Activated CD8-positive, alpha-beta memory T cell treated with anti-CD3 and anti-CD28 coated beads, Interleukin-2, amount 10 ng/mL, durations not matched to agents 7 days and 5 days (primary cell): ENCODE measurements at regions of chrX and their contacts with region 1.

Region 1: GRCh38 chrX:154013614-154014360 is 5.9 kb downstream of the IRAK1 start:
- DNase-seq: peak; percentile 50
- ATAC-seq: peak; percentile 75
- H3K4me3 Mint-ChIP-seq: no peak overlapping the region
- H3K27ac Mint-ChIP-seq: peak overlapping the region; percentile 73
- H3K4me1 Mint-ChIP-seq: peaks cover 21% of the 10 kb centered on the region
- H3K27me3 Mint-ChIP-seq: no peaks in the 10 kb centered on the region

Region 2: DNA sequence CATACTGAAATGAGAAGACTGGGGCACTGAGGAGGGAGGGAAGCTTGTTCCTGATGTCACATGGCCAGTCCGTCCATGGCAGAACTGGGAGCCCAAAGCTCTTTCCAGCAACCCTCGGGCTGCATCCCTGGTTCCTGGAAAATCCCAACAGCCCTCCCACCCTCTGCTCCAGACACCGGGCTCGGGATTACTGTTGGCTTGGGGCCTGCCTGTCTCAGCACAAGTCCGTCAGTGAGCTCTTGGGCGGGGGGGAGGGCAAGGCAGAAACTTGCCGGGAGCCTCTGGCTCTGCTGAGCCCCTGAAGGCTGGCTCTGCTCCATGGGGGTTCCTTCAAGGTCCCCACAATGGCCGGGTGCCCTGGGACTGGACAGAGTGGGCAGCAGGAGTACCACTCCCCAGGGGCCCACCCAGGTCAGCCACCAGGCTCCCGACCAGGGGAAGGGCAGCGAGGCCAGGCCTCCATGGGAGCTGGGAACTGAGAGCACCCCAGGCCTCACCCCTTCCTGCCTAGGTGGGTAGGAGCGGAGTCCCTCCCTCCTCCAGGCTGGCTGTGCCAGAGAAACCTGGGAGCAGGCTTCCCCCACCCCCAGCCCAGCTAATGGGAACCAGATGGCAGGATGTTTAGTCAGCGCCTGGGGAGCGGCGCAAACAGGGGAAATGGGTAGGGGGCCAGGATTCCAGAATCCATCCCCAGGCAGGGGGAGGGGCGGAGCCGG is 537.0 kb before region 1 on chrX:
- CTCF ChIA-PET with region 1: no interaction called
- DNase-seq: no peak
- ATAC-seq: no peak
- H3K4me3 Mint-ChIP-seq: no peak overlapping the region
- H3K27ac Mint-ChIP-seq: no peak overlapping the region
- H3K4me1 Mint-ChIP-seq: peaks cover 3% of the 10 kb centered on the region
- H3K27me3 Mint-ChIP-seq: peaks cover 10% of the 10 kb centered on the region

Region 3: DNA sequence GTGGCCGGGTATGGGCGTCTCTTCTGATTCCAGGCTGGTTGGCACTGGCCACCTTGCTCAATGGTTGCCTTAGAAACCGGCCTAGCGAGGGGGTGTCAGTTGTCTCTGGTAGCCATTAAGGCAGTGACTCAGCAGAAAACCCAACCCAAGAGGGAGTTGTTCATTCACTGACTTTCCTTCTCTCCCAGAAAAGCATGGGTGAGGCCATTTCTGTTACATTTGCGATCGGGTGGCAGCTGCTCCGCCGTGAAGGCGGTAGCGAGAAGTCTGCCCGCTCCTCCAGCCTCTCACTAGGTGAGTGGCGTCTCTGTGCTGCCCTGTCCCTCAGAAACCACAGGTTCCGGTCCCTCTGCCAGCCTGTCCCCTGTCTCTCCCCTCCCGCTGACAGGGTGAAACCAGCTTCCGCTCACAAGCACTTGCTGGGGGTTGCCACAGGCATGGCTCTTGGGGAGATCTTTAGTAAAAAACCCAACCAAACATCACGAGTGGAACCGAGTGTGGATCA is 11.5 kb before region 1 on chrX:
- CTCF ChIA-PET with region 1: interaction called, 40 read pairs
- DNase-seq: peak; percentile 76
- ATAC-seq: peak; percentile 88
- H3K4me3 Mint-ChIP-seq: peak overlapping the region; percentile 54
- H3K27ac Mint-ChIP-seq: peak overlapping the region; percentile 88
- H3K4me1 Mint-ChIP-seq: peaks cover 16% of the 10 kb centered on the region
- H3K27me3 Mint-ChIP-seq: no peaks in the 10 kb centered on the region